ENCODE measurements at regions of chr13 and their contacts with region 1.

Region 1: GRCh38 chr13:19927117-19927748 is 31.3 kb upstream of the ZMYM2 start:
- DNase-seq: peak; percentile 27
- ATAC-seq: peak; percentile 80; the same call in 1 of the 2 replicates
- H3K4me3 ChIP-seq: no peak overlapping the region
- H3K27ac ChIP-seq: no peak overlapping the region
- H3K4me1 ChIP-seq: no peaks in the 10 kb centered on the region
- H3K27me3 ChIP-seq: no peaks in the 10 kb centered on the region
- CTCF ChIP-seq: peak; percentile 67; the same call in 1 of the 2 replicates

Region 2: DNA sequence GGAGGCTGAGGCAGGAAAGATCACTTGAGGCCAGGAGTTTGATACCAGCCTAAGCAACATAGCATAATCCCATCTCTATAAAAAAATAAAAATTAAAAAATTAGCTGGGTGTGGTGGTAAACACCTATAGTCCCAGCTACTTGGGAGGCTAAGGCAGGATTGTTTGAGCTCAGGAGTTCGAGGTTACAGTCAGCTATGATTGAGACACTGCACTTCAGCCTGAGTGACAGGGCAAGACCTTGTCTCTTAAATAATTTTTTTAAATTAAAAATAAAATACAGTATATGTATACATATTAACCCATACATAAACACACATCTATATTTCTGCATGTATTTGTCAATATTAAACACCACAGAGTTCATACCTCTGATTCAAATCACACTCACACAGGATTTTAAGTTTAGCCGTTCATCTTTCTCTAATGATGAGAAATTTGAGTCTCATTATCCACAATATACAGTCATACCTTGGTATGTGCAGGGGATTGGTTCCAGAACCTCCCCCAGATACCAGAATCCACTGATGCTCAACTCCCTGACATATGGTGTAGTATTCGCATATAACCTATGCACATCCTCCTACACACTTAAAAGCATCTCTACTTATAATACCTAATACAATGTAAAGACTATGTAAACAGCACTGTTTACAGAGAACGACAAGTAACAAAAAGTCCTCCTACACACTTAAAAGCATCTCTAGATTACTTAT is 189.2 kb before region 1 on chr13:
- CTCF ChIA-PET with region 1: no interaction called
- POLR2A ChIA-PET with region 1: no interaction called
- in situ Hi-C with region 1: no loop called
- intact Hi-C with region 1: no loop called
- DNase-seq: no peak
- ATAC-seq: peak; percentile 56; the same call in 1 of the 2 replicates
- H3K4me3 ChIP-seq: no peak overlapping the region
- H3K27ac ChIP-seq: no peak overlapping the region
- H3K4me1 ChIP-seq: no peaks in the 10 kb centered on the region
- H3K27me3 ChIP-seq: no peaks in the 10 kb centered on the region
- CTCF ChIP-seq: no peak

Region 3: GRCh38 chr13:19959831-19960652 is 32.8 kb after region 1 on chr13:
- CTCF ChIA-PET with region 1: interaction called, 6 read pairs
- POLR2A ChIA-PET with region 1: no interaction called
- in situ Hi-C with region 1: no loop called
- intact Hi-C with region 1: loop called (anchors 5 kb)
- DNase-seq: peak; percentile 61
- ATAC-seq: peak; percentile 70
- H3K4me3 ChIP-seq: peak overlapping the region; percentile 77 to 85
- H3K27ac ChIP-seq: peak overlapping the region; percentile 85
- H3K4me1 ChIP-seq: peaks cover 11% of the 10 kb centered on the region; the same call in 1 of the 2 replicates
- H3K27me3 ChIP-seq: no peaks in the 10 kb centered on the region
- CTCF ChIP-seq: peak; percentile 87

Region 4: GRCh38 chr13:20035130-20035529 is 107.9 kb after region 1 on chr13:
- CTCF ChIA-PET with region 1: no interaction called
- POLR2A ChIA-PET with region 1: no interaction called
- in situ Hi-C with region 1: no loop called
- intact Hi-C with region 1: no loop called
- DNase-seq: no peak
- ATAC-seq: no peak
- H3K4me3 ChIP-seq: no peak overlapping the region
- H3K27ac ChIP-seq: no peak overlapping the region
- H3K4me1 ChIP-seq: no peaks in the 10 kb centered on the region
- H3K27me3 ChIP-seq: no peaks in the 10 kb centered on the region
- CTCF ChIP-seq: peak; percentile 27; the same call in 1 of the 2 replicates

Measured in Panc1 (cell line).